Heart left ventricle (tissue), 16 donors: ENCODE measurements at regions of chr9 and their contacts with region 1.

Region 1: GRCh38 chr9:99819856-99820684 is 1.6 kb upstream of the NR4A3 start:
- DNase-seq: peak; percentile 94 to 97 (median 96)
- ATAC-seq: peak; percentile 68 to 79 (median 72)
- H3K4me3 ChIP-seq: peak overlapping the region; percentile 66 to 95 (median 88)
- H3K27ac ChIP-seq: peak overlapping the region; percentile 97 to 100 (median 98)
- H3K4me1 ChIP-seq: peaks cover 0 to 34% (median 22%) of the 10 kb centered on the region in 12 donors
- H3K27me3 ChIP-seq: peaks cover 0 to 14% (median 3%) of the 10 kb centered on the region in 9 donors
- CTCF ChIP-seq: peak in 6 of 12 donors; percentile 16 to 42 (median 31)
- POLR2A ChIP-seq: peak in 1 of 2 donors; percentile 34

Region 2: DNA sequence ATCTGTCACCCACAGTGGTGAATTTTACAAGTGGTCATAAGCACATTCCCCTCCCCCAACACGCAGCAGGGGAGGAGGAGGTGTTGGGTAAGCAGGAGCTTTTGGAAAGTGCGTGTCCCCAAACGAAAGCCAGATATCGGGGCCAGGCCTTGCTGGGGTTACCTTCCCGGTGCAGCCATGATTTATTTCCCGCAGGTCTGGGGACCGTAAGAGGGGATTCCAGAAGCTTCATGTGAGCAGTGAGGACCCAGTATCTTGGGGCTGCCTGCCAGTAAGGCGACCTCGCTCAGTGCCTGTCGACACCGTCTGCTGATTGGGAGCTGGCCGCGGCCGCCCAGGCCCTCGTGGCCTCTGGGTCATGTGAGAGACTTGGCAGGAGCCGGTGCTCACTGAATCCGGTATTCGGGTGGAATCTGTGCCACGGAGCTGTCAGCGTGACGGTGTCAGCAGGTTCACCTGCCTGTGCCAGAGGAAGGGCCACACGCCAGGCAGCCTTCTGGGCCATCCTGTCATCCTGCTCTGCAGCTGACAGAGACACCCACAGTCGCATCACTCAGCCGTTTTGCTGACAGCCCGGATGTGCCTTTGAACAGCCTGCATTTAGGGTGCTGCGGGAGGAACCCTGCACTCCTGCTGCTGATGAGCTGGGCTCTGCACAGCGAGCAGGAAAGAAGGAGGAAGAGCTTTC is 560.7 kb before region 1 on chr9:
- intact Hi-C with region 1: loop called in 1 of 10 experiments (anchors 2 kb)
- DNase-seq: peak; percentile 86 to 96 (median 91)
- ATAC-seq: peak; percentile 95 to 96 (median 96)
- H3K4me3 ChIP-seq: peak overlapping the region in 11 of 12 donors; percentile 4 to 57 (median 45)
- H3K27ac ChIP-seq: peak overlapping the region; percentile 36 to 90 (median 80)
- H3K4me1 ChIP-seq: peaks cover 0 to 39% (median 11%) of the 10 kb centered on the region in 12 donors
- H3K27me3 ChIP-seq: no peaks in the 10 kb centered on the region
- CTCF ChIP-seq: no peak
- POLR2A ChIP-seq: peak in 1 of 2 donors; percentile 47

Region 3: GRCh38 chr9:99445371-99445891 is 374.6 kb before region 1 on chr9:
- intact Hi-C with region 1: loop called in 2 of 10 experiments (anchors 2 to 10 kb)
- DNase-seq: peak; percentile 69 to 91 (median 79)
- ATAC-seq: peak; percentile 97 to 99 (median 98)
- H3K4me3 ChIP-seq: peak overlapping the region in 1 of 12 donors; percentile 2
- H3K27ac ChIP-seq: peak overlapping the region in 11 of 12 donors; percentile 25 to 82 (median 67)
- H3K4me1 ChIP-seq: peaks cover 0 to 21% (median 10%) of the 10 kb centered on the region in 12 donors
- H3K27me3 ChIP-seq: no peaks in the 10 kb centered on the region
- CTCF ChIP-seq: no peak
- POLR2A ChIP-seq: no peak

Region 4: GRCh38 chr9:99796231-99796630 is 23.8 kb before region 1 on chr9:
- intact Hi-C with region 1: no loop called
- DNase-seq: no peak
- ATAC-seq: no peak
- H3K4me3 ChIP-seq: no peak overlapping the region
- H3K27ac ChIP-seq: no peak overlapping the region
- H3K4me1 ChIP-seq: no peaks in the 10 kb centered on the region
- H3K27me3 ChIP-seq: no peaks in the 10 kb centered on the region
- CTCF ChIP-seq: no peak
- POLR2A ChIP-seq: no peak

Region 5: GRCh38 chr9:99906403-99907207 is 86.5 kb after region 1 on chr9 and contains the start of gene STX17:
- intact Hi-C with region 1: loop called in 9 of 10 experiments (anchors 2 to 5 kb)
- DNase-seq: peak; percentile 80 to 90 (median 83)
- ATAC-seq: peak; percentile 79 to 98 (median 97)
- H3K4me3 ChIP-seq: peak within 1 kb of the TSS; percentile 62 to 100 (median 92)
- H3K27ac ChIP-seq: peak within 1 kb of the TSS; percentile 90 to 99 (median 96)
- H3K4me1 ChIP-seq: peaks cover 0 to 27% (median 13%) of the 10 kb centered on the region in 12 donors
- H3K27me3 ChIP-seq: no peaks in the 10 kb centered on the region
- CTCF ChIP-seq: peak in 2 of 12 donors; percentile 7 to 21
- POLR2A ChIP-seq: peak; percentile 34 to 77
- total RNA-seq, gene STX17: 15.4 to 29.1 (median 23.7) TPM

Region 6: DNA sequence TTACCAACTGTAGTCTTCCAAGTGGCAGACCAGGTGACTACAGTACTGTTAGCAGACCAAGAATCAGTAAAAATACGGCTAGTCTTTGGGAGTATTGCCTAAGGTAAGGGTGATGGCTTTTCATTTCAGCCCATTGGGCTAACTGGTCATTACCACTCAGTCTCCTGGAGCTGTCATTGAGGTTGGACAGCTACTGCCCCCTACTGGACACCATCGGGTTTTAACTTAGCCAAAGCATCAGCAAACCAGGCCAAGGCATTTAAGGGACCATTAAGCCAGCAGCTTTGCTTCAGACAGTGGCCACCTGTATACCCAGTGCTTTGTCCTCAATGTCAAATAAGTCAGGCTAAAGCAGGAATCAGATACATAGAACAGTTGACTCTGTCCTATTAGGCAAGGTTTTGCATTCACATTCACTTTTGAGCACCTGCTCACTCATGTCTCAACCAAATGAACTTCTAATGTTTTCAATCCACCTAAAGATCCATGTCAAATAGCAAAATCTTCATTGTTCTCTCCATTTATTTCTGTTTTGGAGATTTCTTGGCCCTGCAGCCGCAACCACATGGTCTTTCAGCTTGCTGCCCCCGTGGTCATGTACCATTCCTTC is 396.2 kb after region 1 on chr9:
- intact Hi-C with region 1: loop called in 3 of 10 experiments (anchors 10 kb)
- DNase-seq: peak in 4 of 5 donors; percentile 27 to 50 (median 36)
- ATAC-seq: peak in 3 of 4 donors; percentile 55 to 62 (median 61)
- H3K4me3 ChIP-seq: no peak overlapping the region
- H3K27ac ChIP-seq: no peak overlapping the region
- H3K4me1 ChIP-seq: peaks cover 0 to 7% (median 0%) of the 10 kb centered on the region in 12 donors
- H3K27me3 ChIP-seq: no peaks in the 10 kb centered on the region
- CTCF ChIP-seq: peak; percentile 42 to 70 (median 63)
- POLR2A ChIP-seq: no peak